ENCODE measurements at regions of chr15 and their contacts with region 1.

Region 1: GRCh38 chr15:78750566-78750965 is 60.7 kb downstream of the ADAMTS7 start:
- DNase-seq: no peak
- H3K4me3 ChIP-seq: peak overlapping the region; percentile 23
- H3K27ac ChIP-seq: no peak overlapping the region
- H3K4me1 ChIP-seq: peaks cover 1% of the 10 kb centered on the region
- CTCF ChIP-seq: no peak

Region 2: DNA sequence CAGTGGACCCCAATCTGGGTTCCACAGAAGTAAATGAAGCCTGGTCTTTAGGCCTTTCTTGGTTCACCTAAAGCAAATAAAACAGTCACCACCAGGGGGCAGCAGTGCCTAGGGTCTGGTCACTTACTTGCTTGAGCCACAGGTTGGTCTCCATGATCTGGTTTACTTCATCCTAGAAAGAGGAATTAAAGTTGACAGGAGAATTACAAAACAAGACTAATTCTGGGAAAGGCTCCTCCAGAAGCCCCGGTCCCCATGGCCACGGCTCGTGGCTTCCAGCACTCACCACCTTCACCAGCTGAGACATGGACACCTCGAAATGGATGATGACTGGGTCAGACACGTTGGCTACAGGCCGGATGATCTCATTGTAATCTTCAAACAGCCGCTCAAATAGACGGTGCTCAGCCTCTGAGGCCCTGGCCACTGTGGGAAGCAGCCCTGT is 132.1 kb before region 1 on chr15:
- CTCF ChIA-PET with region 1: no interaction called
- POLR2A ChIA-PET with region 1: no interaction called
- intact Hi-C with region 1: loop called (anchors 1 kb)
- DNase-seq: peak; percentile 83
- H3K4me3 ChIP-seq: no peak overlapping the region
- H3K27ac ChIP-seq: no peak overlapping the region
- H3K4me1 ChIP-seq: no peaks in the 10 kb centered on the region
- CTCF ChIP-seq: peak; percentile 96

Region 3: DNA sequence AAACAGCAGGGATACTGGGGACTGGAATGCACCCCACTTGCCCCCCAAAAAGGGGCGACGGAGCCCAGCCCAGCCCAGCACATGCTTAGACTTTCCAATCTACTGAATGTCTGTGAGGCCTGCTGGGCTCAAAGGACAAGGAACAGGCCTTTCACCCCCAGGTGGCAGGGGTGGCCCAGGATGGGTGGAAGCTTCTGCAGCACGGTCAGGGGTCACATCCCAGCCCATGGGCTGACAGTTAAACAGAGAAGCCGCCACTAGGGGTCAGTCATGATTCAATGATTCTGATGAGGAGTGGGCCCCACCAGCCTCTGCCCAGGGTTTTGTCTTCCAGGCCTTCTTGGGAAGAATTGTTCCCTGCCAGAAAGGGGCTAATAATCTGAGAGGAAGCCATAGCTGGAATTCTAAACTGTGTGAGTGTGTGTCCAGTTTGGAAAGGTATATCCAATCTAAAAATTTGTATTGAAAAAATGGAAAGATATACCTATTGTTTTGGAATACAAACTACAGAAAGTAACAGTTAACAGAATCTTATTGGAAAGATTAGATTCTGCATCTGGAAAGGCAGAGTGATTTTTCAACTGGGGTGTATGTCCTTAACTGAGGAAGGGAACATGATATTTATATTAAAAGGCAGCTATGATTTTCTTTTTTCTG is 111.8 kb before region 1 on chr15:
- CTCF ChIA-PET with region 1: no interaction called
- POLR2A ChIA-PET with region 1: no interaction called
- intact Hi-C with region 1: loop called (anchors 5 kb)
- DNase-seq: peak; percentile 63
- H3K4me3 ChIP-seq: no peak overlapping the region
- H3K27ac ChIP-seq: no peak overlapping the region
- H3K4me1 ChIP-seq: no peaks in the 10 kb centered on the region
- CTCF ChIP-seq: peak; percentile 86

Region 4: DNA sequence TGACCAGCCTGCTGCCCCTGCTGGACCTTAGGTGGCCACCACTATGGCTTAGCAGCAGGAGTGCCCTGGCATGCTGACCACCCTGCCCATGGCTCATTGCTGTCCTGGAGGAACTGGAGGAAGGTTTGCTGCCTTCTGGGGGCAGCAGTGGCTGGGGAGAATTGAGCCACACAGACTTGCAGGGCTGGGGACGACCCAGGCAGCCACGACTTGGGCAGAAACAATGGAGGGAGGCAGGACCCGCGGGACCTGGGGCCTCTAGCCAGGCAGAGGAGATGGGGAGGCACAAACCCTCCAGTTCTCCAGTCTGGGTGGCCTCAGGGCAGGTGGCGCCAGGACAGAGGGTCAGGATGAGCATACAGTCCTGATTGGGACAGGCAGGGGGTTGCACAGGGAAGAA is 27.9 kb after region 1 on chr15:
- CTCF ChIA-PET with region 1: no interaction called
- POLR2A ChIA-PET with region 1: no interaction called
- intact Hi-C with region 1: no loop called
- DNase-seq: no peak
- H3K4me3 ChIP-seq: no peak overlapping the region
- H3K27ac ChIP-seq: no peak overlapping the region
- H3K4me1 ChIP-seq: no peaks in the 10 kb centered on the region
- CTCF ChIP-seq: no peak

Region 5: DNA sequence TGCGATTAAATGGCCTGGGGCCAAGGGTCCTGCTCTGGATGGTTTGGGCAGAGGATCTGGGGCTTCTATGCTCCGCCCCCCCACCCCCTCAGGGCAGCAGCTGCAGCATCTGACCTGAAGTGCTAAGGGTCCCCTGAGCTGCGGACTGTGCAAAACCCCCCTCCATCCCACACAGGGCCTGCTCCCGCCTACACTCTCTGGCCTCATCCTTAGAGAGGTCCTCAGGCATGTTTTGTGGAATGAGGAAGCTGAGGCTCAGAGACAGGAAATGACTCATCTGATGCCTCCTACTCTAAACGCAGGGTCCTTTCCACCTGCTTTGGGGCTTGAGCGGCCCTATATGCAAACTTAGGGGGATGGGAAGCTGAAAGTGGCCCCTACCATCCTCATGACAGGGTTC is 253.8 kb after region 1 on chr15:
- CTCF ChIA-PET with region 1: no interaction called
- POLR2A ChIA-PET with region 1: no interaction called
- intact Hi-C with region 1: loop called (anchors 10 kb)
- DNase-seq: peak; percentile 93
- H3K4me3 ChIP-seq: peak overlapping the region; percentile 55
- H3K27ac ChIP-seq: peak overlapping the region; percentile 57
- H3K4me1 ChIP-seq: peaks cover 59% of the 10 kb centered on the region
- CTCF ChIP-seq: no peak